ENCODE measurements at regions of chr1 and their contacts with region 1.

Region 1: GRCh38 chr1:160607011-160607671 is 27.8 kb upstream of the CD84 start:
- DNase-seq: peak; percentile 58 to 83
- ATAC-seq: peak; percentile 97 to 98
- H3K4me3 ChIP-seq: no peak overlapping the region
- H3K27ac ChIP-seq: no peak overlapping the region
- H3K4me1 ChIP-seq: no peaks in the 10 kb centered on the region
- CTCF ChIP-seq: peak; percentile 92
- EP300 ChIP-seq: no peak
- POLR2A ChIP-seq: no peak
- RAD21 ChIP-seq: peak; percentile 96 to 98

Region 2: GRCh38 chr1:160354388-160354985 is 252.7 kb before region 1 on chr1:
- CTCF ChIA-PET with region 1: interaction called, 10 read pairs
- POLR2A ChIA-PET with region 1: no interaction called
- DNase-seq: peak; percentile 30 to 48
- ATAC-seq: peak; percentile 65 to 88; a peak in 4 of 6 replicates
- H3K4me3 ChIP-seq: no peak overlapping the region
- H3K27ac ChIP-seq: no peak overlapping the region
- H3K4me1 ChIP-seq: no peaks in the 10 kb centered on the region
- CTCF ChIP-seq: peak; percentile 43
- EP300 ChIP-seq: no peak
- POLR2A ChIP-seq: no peak
- RAD21 ChIP-seq: no peak

Region 3: DNA sequence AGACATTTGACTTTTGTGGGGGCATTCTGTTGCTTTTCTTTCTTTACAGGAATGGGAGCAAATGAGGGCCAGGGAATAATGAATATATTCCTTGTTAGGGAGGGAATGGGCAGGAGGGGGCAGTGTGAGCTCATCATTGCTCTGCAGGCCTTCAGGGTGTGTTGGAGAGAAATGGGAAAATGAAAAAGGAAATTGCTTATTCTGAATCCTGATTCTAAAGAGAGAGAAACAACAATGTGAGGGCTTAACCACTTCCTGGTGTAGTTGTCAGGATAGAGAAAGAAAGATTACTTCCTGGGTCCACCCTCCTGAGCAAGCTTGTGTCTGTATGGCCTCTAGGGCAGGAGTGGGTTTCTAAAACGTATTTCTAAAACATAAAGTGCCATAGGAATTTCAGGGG is 178.5 kb before region 1 on chr1:
- CTCF ChIA-PET with region 1: interaction called, 115 read pairs
- POLR2A ChIA-PET with region 1: no interaction called
- DNase-seq: peak; percentile 55 to 64
- ATAC-seq: peak; percentile 71 to 94; a peak in 5 of 6 replicates
- H3K4me3 ChIP-seq: no peak overlapping the region
- H3K27ac ChIP-seq: 0 out of 6 replicates have a peak overlapping the region, but pooled peaks of 1 of the 2 experiments have one; percentile 30
- H3K4me1 ChIP-seq: no peaks in the 10 kb centered on the region
- CTCF ChIP-seq: peak; percentile 90
- EP300 ChIP-seq: no peak
- POLR2A ChIP-seq: no peak
- RAD21 ChIP-seq: peak; percentile 95 to 97

Region 4: GRCh38 chr1:160544647-160545046 is 62.5 kb before region 1 on chr1:
- CTCF ChIA-PET with region 1: interaction called, 13 read pairs
- POLR2A ChIA-PET with region 1: no interaction called
- DNase-seq: peak in 1 of 2 experiments; percentile 28
- ATAC-seq: peak; percentile 37 to 65; a peak in 3 of 6 replicates
- H3K4me3 ChIP-seq: no peak overlapping the region
- H3K27ac ChIP-seq: peak overlapping the region in 1 of 2 experiments; percentile 60; a peak in 2 of 6 replicates
- H3K4me1 ChIP-seq: peaks cover 41% of the 10 kb centered on the region
- CTCF ChIP-seq: peak; percentile 44
- EP300 ChIP-seq: no peak
- POLR2A ChIP-seq: no peak
- RAD21 ChIP-seq: peak in 1 of 2 experiments; percentile 22; a peak in 1 of 5 replicates

Region 5: DNA sequence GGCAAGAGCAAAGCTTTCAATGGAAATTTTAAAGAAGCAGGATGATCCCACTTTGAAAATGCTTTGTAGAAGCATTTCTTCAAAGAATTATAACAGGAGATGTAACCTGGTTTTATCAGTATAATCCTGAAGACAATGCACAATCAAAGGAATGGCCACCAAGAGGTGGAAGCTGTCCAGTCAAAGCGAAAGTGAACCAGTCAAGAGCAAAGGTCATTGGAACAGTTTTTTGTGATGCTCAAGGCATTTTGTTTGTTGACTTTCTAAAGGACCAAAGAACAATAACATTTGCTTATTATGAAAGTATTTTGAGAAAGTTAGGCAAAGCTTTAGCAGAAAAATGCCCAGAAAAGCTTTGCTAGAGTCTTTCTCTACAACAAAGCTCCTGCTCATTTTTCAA is 22.4 kb before region 1 on chr1:
- CTCF ChIA-PET with region 1: interaction called, 16 read pairs
- POLR2A ChIA-PET with region 1: no interaction called
- DNase-seq: no peak
- ATAC-seq: no peak
- H3K4me3 ChIP-seq: no peak overlapping the region
- H3K27ac ChIP-seq: no peak overlapping the region
- H3K4me1 ChIP-seq: no peaks in the 10 kb centered on the region
- CTCF ChIP-seq: no peak
- EP300 ChIP-seq: no peak
- POLR2A ChIP-seq: no peak
- RAD21 ChIP-seq: no peak

Region 6: DNA sequence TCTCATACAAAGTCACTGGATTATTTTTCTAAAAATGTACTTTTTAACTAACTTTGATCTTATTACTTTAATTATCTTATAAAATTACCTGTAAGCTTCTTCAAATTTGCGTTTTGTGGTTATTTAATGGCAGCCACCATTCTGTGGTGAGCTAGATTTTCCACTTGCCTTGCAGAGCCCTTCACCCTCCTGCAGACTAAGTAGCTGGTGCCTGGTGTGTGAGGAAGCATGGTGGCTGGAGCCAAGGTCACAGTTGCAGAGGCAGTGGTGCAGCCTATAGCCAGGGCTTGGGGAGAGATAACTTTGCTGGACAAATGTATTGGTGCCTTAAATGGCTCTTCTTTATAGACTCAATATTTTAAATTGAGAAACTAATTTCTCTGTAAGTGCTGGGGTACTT is 16.7 kb before region 1 on chr1:
- CTCF ChIA-PET with region 1: interaction called, 16 read pairs
- POLR2A ChIA-PET with region 1: no interaction called
- DNase-seq: no peak
- ATAC-seq: no peak
- H3K4me3 ChIP-seq: no peak overlapping the region
- H3K27ac ChIP-seq: no peak overlapping the region
- H3K4me1 ChIP-seq: no peaks in the 10 kb centered on the region
- CTCF ChIP-seq: no peak
- EP300 ChIP-seq: no peak
- POLR2A ChIP-seq: no peak
- RAD21 ChIP-seq: no peak